Heart right ventricle (tissue), 16 donors: ENCODE measurements at regions of chr4 and their contacts with region 1.

Region 1: GRCh38 chr4:157104541-157104940 is 28.6 kb downstream of the GLRB start:
- DNase-seq: no peak
- ATAC-seq: no peak
- H3K4me3 ChIP-seq: no peak overlapping the region
- H3K27ac ChIP-seq: no peak overlapping the region
- H3K4me1 ChIP-seq: no peaks in the 10 kb centered on the region
- H3K27me3 ChIP-seq: no peaks in the 10 kb centered on the region
- CTCF ChIP-seq: no peak

Region 2: DNA sequence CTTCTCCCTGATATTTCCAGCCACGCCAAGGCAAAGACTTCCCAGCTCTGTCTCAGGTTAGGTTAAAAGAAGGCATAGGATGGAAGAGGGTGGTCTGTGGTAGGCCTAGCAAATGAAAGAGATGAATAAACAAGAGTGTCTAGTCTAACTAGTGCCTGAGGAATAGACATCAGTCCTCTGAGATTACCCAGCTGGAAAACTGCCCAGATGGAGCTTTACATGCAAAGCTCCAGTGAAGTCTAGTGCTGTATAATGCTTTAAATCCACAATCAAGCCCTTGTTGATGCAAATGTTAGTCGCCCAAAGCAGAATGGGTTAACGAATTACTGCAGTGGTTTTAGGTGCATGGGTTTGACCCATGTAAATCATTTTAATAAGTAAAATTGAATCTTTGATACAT is 1370.5 kb before region 1 on chr4:
- intact Hi-C with region 1: loop called in 1 of 10 experiments (anchors 5 kb)
- DNase-seq: peak in 1 of 2 donors; percentile 55
- ATAC-seq: peak in 2 of 8 donors; percentile 42 to 62
- H3K4me3 ChIP-seq: no peak overlapping the region
- H3K27ac ChIP-seq: no peak overlapping the region
- H3K4me1 ChIP-seq: peaks cover 0 to 29% (median 12%) of the 10 kb centered on the region in 9 donors
- H3K27me3 ChIP-seq: no peaks in the 10 kb centered on the region
- CTCF ChIP-seq: no peak

Region 3: DNA sequence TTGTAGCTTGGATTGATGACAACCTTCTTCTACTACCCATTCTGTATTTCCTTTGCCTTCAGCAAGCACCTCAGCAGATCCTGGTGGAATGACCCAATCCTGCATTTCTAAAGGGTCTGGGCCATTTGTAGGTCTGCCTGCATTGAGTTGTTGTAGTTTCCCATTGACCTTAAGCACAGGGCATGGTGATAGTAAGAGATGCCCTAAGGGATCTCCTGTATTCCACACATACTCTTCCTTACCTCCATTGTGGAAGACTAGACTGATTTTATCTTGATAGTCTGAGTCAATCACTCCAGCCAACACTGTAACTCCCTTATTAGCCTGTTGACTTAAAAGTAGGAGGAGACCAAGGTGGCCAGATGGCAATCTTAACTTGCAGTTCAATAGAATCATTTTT is 300.5 kb after region 1 on chr4:
- intact Hi-C with region 1: no loop called
- DNase-seq: no peak
- ATAC-seq: no peak
- H3K4me3 ChIP-seq: no peak overlapping the region
- H3K27ac ChIP-seq: no peak overlapping the region
- H3K4me1 ChIP-seq: no peaks in the 10 kb centered on the region
- H3K27me3 ChIP-seq: no peaks in the 10 kb centered on the region
- CTCF ChIP-seq: no peak